ENCODE measurements at regions of chr17 and their contacts with region 1.

Region 1: DNA sequence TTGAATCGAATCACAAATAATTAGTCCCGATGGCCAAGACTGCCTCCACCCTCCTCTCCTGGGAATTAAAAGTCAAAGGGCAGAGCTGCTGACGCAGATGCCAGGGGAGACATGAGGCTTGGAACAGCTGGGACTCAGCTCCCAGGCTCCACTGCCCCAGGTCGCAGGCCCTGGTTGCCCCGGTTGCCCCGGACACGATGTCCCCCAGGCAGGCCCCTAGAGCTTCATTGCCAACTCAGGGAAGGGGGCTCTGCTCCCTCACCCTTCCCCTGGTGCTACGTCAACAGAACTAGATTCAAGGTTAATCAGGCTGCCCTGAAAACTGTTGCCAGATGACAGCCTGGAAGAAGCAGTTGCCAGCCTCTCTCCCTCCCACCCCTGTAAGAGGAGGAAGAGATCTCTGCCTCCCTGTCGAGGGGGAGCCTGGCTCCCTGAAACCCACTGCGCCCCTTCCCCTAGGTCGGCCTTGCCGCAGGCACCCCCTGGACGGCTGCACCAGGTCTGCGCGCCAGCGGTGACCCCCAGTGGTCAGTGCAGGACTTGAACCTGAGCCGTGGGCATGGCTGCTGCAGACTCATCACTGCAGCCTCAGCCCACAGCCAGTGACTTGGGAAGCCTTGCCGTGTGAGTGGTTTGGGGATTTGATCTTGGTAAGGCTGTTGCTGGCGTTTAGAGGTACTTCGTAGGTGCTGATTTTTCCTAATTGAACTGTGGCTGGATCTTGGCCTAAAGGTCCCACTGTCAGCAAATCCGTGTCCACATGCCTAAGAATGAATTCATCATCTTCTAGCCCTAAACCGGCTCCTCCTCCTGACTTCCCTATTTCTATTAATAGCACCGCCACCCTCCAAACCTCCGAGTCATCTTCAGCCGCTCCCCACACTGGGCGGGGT is 84.1 kb upstream of the TOB1 start:
- DNase-seq: peak; percentile 76
- H3K4me3 ChIP-seq: peak overlapping the region in 1 of 3 experiments; percentile 31
- H3K27ac ChIP-seq: peak overlapping the region; percentile 79
- H3K4me1 ChIP-seq: peaks cover 57% of the 10 kb centered on the region
- H3K27me3 ChIP-seq: no peaks in the 10 kb centered on the region
- CTCF ChIP-seq: peak; percentile 72 to 90 (median 77)

Region 2: DNA sequence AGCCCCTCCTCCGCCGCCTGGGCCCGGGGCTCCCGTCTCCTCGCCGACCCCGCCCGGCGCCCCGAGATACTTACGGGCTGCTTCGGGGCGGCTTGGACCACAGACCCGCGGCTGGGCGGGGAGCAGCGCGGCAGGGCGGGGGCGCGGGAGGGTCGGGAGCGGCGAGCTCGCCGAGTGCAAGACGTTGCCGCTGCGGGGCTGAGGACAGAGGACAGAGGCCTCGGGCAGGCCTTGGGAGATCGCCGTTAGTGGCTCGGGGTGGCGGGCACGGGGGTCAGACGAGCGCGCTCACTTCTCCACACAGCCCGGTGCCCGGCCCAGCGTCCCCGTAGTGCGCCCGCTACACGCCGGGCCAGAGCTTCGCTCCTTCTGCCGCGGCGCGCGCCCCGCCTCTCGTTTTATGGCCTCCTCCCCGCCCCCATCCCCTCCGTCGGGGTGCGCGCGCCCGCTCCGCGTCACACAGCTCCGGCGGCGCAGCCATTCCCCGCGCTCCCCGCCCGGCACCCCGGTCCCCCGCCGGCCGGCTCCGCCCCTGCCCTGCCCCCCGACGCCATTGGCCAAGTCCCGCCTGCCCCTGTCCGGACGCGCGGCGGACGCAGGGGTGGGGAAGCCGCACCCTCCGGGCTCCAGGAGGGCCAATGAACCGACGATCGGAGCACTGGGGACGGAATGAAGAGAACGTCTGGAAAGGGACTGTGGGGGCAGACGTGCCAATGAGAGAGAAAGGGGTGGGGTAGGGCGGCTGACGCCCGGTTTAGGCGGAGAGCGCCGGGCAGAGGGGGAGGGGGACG is 84.1 kb before region 1 on chr17 and contains the start of gene TOB1:
- dilution Hi-C with region 1: loop called (anchors 25 kb)
- DNase-seq: no peak
- H3K4me3 ChIP-seq: peak within 1 kb of the TSS; percentile 72 to 99 (median 98)
- H3K27ac ChIP-seq: peak within 1 kb of the TSS; percentile 98
- H3K4me1 ChIP-seq: peaks cover 31% of the 10 kb centered on the region
- H3K27me3 ChIP-seq: no peaks in the 10 kb centered on the region
- CTCF ChIP-seq: no peak
- polyA plus RNA-seq, gene TOB1: 59.5 to 73.3 TPM (median 64.4 TPM) in 3 replicates